IMR-90 (cell line): ENCODE measurements at regions of chr6 and their contacts with region 1.

Region 1: GRCh38 chr6:136846046-136846445 is 23.7 kb downstream of the PEX7 start:
- DNase-seq: peak; percentile 80
- ATAC-seq: peak; percentile 83
- H3K4me3 ChIP-seq: no peak overlapping the region
- H3K27ac ChIP-seq: no peak overlapping the region
- H3K4me1 ChIP-seq: no peaks in the 10 kb centered on the region
- H3K27me3 ChIP-seq: no peaks in the 10 kb centered on the region
- CTCF ChIP-seq: peak; percentile 76
- POLR2A ChIP-seq: no peak
- RAD21 ChIP-seq: peak; percentile 72

Region 2: DNA sequence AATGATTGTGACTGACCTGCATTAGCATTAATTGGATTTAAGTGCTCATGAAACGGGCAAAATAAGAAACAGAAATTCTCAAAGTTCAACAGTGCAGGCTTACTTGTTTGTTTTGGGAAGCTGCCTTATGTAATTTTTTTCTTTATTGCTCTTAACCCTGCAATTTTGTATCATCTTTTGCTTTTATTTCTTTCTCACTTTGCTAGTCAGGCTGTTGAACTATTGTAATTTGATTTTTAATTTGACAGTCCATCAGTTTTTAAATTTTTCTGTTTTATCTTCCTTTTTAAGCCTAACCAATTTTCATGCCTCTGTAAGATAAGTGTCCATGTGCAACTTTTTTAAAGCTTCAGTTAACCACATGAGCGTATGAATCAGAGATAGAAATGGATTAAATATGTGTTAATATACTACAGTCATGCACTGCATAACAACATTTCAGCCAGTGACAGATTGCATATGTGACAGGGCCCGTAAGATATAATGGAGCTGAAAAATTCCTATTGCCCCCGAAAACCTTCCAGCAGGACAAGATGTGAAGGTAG is 20.9 kb after region 1 on chr6:
- CTCF ChIA-PET with region 1: no interaction called
- POLR2A ChIA-PET with region 1: no interaction called
- dilution Hi-C with region 1: no loop called
- in situ Hi-C with region 1: no loop called
- intact Hi-C with region 1: no loop called
- DNase-seq: peak; percentile 48
- ATAC-seq: peak; percentile 59
- H3K4me3 ChIP-seq: no peak overlapping the region
- H3K27ac ChIP-seq: no peak overlapping the region
- H3K4me1 ChIP-seq: no peaks in the 10 kb centered on the region
- H3K27me3 ChIP-seq: no peaks in the 10 kb centered on the region
- CTCF ChIP-seq: no peak
- POLR2A ChIP-seq: no peak
- RAD21 ChIP-seq: no peak

Region 3: DNA sequence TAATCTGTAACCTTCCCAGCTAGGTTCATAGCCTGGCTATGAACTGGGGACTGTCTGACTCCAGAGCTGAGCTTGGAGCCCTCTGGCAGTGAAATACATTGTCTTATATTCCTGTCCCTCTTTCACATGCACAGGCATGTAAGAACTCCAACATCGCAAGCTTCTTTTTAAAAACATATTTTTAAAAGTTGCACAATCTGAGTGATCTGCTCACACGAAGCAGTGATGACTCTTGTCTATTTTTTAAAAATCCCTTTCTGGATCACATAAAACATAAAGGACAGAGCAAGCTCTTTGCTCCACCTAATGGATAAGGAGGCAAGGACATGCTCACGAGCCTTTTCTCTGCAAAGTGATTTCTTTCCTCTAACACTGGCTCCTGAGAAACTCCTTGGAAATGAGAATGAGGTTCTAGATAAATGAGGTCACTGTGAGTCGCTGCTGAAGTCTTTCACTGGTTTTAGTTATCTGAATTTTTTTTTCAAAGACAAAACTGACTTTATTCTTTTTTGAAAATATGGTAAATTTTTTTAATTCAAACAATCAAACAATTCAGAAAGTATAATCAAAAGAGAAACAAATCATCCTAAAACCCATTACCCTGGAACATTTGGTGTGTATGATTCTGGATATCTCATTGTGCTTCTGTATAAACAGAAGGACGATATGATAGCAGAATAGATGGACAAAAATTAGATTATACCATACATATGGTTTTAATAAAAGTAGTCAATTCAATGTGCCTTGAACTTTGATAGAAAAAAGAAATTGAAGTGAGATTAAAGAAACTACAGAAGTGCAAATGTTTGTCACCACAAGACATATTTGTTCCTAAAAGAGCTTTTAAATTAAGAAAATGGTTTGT is 167.9 kb after region 1 on chr6:
- CTCF ChIA-PET with region 1: interaction called, 3 read pairs
- POLR2A ChIA-PET with region 1: no interaction called
- dilution Hi-C with region 1: no loop called
- in situ Hi-C with region 1: loop called (anchors 10 kb)
- intact Hi-C with region 1: loop called (anchors 1 kb)
- DNase-seq: peak; percentile 60
- ATAC-seq: peak; percentile 91
- H3K4me3 ChIP-seq: no peak overlapping the region
- H3K27ac ChIP-seq: no peak overlapping the region
- H3K4me1 ChIP-seq: no peaks in the 10 kb centered on the region; the same call in 1 of the 2 replicates
- H3K27me3 ChIP-seq: peaks cover 7% of the 10 kb centered on the region
- CTCF ChIP-seq: peak; percentile 58
- POLR2A ChIP-seq: no peak
- RAD21 ChIP-seq: peak; percentile 57

Region 4: GRCh38 chr6:137094411-137095008 is 248.5 kb after region 1 on chr6:
- CTCF ChIA-PET with region 1: no interaction called
- POLR2A ChIA-PET with region 1: no interaction called
- dilution Hi-C with region 1: no loop called
- in situ Hi-C with region 1: no loop called
- intact Hi-C with region 1: loop called (anchors 1 kb)
- DNase-seq: peak; percentile 67
- ATAC-seq: peak; percentile 82
- H3K4me3 ChIP-seq: no peak overlapping the region
- H3K27ac ChIP-seq: no peak overlapping the region
- H3K4me1 ChIP-seq: no peaks in the 10 kb centered on the region
- H3K27me3 ChIP-seq: peaks cover 14% of the 10 kb centered on the region
- CTCF ChIP-seq: peak; percentile 78
- POLR2A ChIP-seq: no peak
- RAD21 ChIP-seq: peak; percentile 78